Aorta (tissue), 5 donors: ENCODE measurements at regions of chr3 and their contacts with region 1.

Region 1: GRCh38 chr3:150721285-150722130 is 17.8 kb upstream of the ERICH6 start:
- DNase-seq: no peak
- ATAC-seq: peak; percentile 78
- H3K4me3 ChIP-seq: no peak overlapping the region
- H3K27ac ChIP-seq: no peak overlapping the region
- H3K4me1 ChIP-seq: no peaks in the 10 kb centered on the region
- H3K27me3 ChIP-seq: no peaks in the 10 kb centered on the region

Region 2: DNA sequence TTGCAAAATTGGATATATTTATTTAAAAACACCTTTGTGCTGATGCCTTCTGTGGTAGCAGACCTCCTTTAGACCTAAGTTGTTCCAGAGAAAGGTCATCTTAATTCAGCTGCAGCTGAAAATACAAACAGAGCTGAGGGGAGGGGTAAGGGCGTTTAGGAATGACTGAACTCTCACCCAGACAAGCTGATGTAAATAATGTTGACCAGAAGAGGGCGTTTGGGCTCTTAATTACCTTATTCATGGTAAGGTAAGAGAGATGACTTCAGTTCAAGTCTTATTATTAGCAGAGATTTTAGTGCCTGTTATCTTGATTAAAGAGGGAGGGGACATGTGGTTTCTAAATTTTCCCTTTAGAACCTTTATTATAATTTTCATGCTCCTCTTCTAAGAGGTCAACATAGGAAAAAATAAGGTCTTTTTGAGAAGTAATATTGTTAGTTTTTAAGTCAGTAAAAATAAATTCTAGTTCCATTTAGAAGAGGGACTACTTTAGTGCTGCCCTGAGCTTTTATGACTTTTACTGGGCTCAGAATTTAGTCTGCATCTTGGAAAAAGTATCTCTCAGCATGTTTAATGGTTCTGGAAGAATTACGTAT is 435.2 kb after region 1 on chr3:
- intact Hi-C with region 1: loop called in 1 of 2 experiments (anchors 10 kb)
- DNase-seq: no peak
- ATAC-seq: no peak
- H3K4me3 ChIP-seq: no peak overlapping the region
- H3K27ac ChIP-seq: no peak overlapping the region
- H3K4me1 ChIP-seq: no peaks in the 10 kb centered on the region
- H3K27me3 ChIP-seq: no peaks in the 10 kb centered on the region